MCF 10A (cell line): ENCODE measurements at regions of chr7 and their contacts with region 1.

Region 1: GRCh38 chr7:95690367-95690947 is 81.9 kb upstream of the DYNC1I1 start:
- DNase-seq: peak; percentile 68
- H3K4me3 Mint-ChIP-seq: peak overlapping the region; percentile 13
- H3K27ac Mint-ChIP-seq: peak overlapping the region; percentile 46
- H3K4me1 Mint-ChIP-seq: peaks cover 22% of the 10 kb centered on the region
- H3K27me3 Mint-ChIP-seq: peaks cover 11% of the 10 kb centered on the region
- CTCF ChIP-seq: peak; percentile 69

Region 2: DNA sequence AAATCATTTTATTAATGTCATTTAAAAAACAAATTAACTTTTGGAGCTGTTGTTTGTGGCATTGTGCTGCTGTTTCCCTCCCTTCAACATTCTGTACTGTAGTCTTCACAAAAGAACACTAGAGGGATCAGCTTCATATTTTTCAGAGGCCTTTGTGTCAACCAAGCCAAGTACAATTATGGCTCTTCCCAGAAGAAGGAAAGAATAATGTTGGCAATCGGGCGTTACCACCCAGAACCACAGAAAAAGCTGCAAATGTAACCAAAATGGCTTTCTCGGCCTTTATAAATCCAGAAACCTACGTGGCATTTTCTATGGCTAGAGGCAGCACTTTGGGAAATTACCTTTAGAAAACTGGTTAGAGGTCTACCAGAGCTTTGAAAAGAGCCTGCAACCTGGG is 1394.6 kb before region 1 on chr7:
- CTCF ChIA-PET with region 1: interaction called, 5 read pairs
- POLR2A ChIA-PET with region 1: no interaction called
- intact Hi-C with region 1: loop called (anchors 5 kb)
- DNase-seq: peak; percentile 38
- H3K4me3 Mint-ChIP-seq: no peak overlapping the region
- H3K27ac Mint-ChIP-seq: no peak overlapping the region
- H3K4me1 Mint-ChIP-seq: peaks cover 28% of the 10 kb centered on the region
- H3K27me3 Mint-ChIP-seq: no peaks in the 10 kb centered on the region
- CTCF ChIP-seq: peak; percentile 37

Region 3: DNA sequence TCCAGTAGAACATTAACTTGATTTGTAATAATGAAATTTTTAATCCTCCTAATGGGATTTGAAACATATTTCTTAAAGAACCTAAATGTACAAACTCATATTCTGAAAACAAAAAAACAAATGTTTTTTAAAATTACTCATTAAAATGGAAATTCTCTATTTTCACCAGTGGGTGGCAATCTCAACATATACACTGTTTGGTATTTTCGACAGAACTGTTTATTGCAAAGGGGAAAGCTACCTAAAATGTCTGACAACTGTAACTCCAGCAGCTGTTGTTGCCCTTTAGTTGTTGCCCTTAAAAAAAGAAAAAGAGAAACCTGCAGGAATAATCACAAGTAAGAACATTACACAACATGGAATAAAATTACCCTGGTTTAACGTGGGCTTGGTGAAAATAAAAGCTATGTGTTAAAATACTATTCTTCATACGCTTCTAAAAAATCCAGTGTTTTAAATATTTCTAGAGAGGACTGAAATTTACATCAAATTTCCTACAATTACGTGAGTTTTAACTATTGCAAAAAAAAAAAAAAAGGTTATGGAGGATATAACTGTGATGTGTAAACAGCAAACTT is 1241.2 kb before region 1 on chr7:
- CTCF ChIA-PET with region 1: interaction called, 9 read pairs
- POLR2A ChIA-PET with region 1: interaction called, 3 read pairs
- intact Hi-C with region 1: loop called (anchors 5 kb)
- DNase-seq: peak; percentile 47
- H3K4me3 Mint-ChIP-seq: no peak overlapping the region
- H3K27ac Mint-ChIP-seq: no peak overlapping the region
- H3K4me1 Mint-ChIP-seq: no peaks in the 10 kb centered on the region
- H3K27me3 Mint-ChIP-seq: peaks cover 15% of the 10 kb centered on the region
- CTCF ChIP-seq: peak; percentile 52

Region 4: GRCh38 chr7:95511716-95512260 is 178.7 kb before region 1 on chr7:
- CTCF ChIA-PET with region 1: interaction called, 390 read pairs
- POLR2A ChIA-PET with region 1: interaction called, 11 read pairs
- intact Hi-C with region 1: loop called (anchors 1 kb)
- DNase-seq: peak; percentile 78
- H3K4me3 Mint-ChIP-seq: no peak overlapping the region
- H3K27ac Mint-ChIP-seq: no peak overlapping the region
- H3K4me1 Mint-ChIP-seq: no peaks in the 10 kb centered on the region
- H3K27me3 Mint-ChIP-seq: peaks cover 29% of the 10 kb centered on the region
- CTCF ChIP-seq: peak; percentile 59

Region 5: DNA sequence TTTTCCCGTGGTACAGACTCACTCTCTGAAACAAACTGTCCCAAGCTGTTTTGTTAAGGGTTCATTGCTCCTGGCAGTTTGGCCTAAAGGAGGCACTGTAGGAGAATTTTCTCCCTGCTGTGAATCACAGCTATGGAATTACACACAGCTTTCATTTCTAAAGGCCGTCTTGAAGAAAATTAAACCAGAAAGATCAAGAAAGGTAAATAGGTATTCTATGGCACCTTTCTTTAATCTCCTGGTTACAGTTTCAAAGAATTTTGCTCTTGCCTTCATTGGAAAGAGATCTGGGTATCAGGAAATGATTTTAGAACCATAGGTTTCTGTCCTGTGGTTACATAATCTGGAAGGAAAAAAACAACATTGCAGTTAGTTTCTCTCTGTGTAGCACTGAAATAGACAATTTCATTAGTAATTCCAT is 145.4 kb before region 1 on chr7:
- CTCF ChIA-PET with region 1: interaction called, 1,114 read pairs
- POLR2A ChIA-PET with region 1: interaction called, 59 read pairs
- intact Hi-C with region 1: no loop called
- DNase-seq: peak; percentile 77
- H3K4me3 Mint-ChIP-seq: peak overlapping the region; percentile 59
- H3K27ac Mint-ChIP-seq: peak overlapping the region; percentile 76
- H3K4me1 Mint-ChIP-seq: peaks cover 33% of the 10 kb centered on the region
- H3K27me3 Mint-ChIP-seq: peaks cover 19% of the 10 kb centered on the region
- CTCF ChIP-seq: peak; percentile 61

Region 6: DNA sequence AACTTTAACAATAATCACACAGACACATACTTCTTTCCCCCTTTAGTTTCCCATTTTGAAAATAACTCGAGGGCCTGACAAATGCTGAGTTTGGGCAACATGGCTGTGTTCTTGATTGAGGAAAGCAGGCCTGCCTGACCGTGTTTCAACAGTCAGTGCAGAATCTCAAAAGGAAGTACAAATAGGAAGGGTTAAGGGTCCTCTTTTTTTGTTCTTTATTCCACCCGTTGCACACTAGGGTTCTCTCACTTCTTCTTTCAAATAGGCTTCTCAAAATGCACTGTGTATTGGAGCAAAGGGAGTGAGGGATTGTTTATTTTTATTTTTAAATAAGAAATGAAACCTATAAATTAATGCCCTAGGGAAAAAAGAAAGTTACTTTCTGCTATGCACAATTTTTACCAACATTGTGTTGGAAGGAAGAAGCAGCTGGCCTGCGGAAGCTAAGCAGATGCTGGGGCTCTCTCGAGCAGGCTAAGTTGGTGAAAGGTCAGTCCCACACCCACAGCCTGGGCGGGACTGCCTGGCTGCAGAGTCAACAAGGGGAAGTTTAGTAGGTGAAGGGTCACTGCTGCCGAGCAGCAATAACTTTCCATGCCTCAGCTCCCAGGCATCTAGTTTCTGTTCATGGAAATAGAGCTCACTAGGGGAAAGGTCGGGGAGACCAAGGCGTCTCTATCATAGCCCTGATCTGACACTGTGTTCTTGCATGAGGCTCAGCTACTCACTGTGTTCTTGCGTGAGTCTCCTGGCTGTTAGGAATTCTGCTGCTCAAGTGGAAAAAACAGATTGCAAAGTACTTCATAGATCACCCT is 81.9 kb before region 1 on chr7:
- CTCF ChIA-PET with region 1: interaction called, 14 read pairs
- POLR2A ChIA-PET with region 1: interaction called, 4 read pairs
- intact Hi-C with region 1: no loop called
- DNase-seq: peak; percentile 95
- H3K4me3 Mint-ChIP-seq: peak overlapping the region; percentile 53
- H3K27ac Mint-ChIP-seq: peak overlapping the region; percentile 90
- H3K4me1 Mint-ChIP-seq: peaks cover 13% of the 10 kb centered on the region
- H3K27me3 Mint-ChIP-seq: no peaks in the 10 kb centered on the region
- CTCF ChIP-seq: no peak